Heart right ventricle (tissue), 16 donors: ENCODE measurements at regions of chr16 and their contacts with region 1.

Region 1: DNA sequence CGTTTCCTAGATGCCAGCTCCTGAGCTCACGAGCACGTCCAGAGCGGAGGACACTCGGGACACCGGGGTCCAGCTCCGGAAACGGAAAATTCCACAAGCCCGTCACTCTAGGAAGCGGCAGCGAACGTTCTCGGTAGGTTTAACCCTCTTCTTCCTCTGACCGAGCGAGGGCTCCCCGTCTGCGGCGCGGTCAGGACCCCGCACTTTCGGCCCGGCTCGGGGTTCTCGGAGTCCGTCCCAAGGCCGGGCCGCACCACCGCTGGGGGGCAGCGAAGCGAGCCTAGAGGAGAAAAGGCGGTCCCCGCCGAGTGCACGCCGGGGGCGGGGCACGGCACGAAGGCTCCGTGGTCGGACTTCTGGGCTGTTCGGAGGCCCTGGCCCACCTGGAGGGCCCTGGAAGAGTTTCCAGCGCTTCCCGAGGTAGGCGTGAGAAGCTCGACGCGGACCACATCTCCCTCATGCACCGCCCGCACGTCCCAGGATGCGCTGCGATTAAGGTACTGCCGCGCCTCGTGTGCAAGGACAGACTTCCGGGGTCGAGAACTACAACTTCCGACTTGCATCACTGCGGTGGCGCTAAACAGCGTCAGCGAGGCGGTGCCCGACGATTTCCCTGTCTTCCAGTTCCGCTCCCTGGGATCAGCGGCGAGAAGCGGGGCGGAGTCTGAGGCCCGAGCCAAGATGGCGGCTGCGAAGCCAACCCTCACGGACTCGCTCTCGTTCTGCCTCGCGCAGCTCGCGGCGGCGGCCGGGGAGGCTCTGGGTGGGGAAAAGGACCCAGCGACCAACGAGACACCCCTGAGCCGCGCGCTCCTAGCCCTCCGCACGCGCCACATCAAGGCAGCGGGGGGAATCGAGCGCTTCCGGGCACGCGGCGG is at the start of gene ARMC5:
- DNase-seq: peak; percentile 97 to 98
- ATAC-seq: peak; percentile 87 to 93 (median 90)
- H3K4me3 ChIP-seq: peak within 1 kb of the TSS; percentile 37 to 90 (median 75)
- H3K27ac ChIP-seq: peak within 1 kb of the TSS; percentile 95 to 100 (median 98)
- H3K4me1 ChIP-seq: peaks cover 9 to 55% (median 48%) of the 10 kb centered on the region in 9 donors
- H3K27me3 ChIP-seq: no peaks in the 10 kb centered on the region
- CTCF ChIP-seq: peak; percentile 19 to 83 (median 61)
- total RNA-seq, gene ARMC5: 3.8 to 7.8 (median 6.4) TPM

Region 2: DNA sequence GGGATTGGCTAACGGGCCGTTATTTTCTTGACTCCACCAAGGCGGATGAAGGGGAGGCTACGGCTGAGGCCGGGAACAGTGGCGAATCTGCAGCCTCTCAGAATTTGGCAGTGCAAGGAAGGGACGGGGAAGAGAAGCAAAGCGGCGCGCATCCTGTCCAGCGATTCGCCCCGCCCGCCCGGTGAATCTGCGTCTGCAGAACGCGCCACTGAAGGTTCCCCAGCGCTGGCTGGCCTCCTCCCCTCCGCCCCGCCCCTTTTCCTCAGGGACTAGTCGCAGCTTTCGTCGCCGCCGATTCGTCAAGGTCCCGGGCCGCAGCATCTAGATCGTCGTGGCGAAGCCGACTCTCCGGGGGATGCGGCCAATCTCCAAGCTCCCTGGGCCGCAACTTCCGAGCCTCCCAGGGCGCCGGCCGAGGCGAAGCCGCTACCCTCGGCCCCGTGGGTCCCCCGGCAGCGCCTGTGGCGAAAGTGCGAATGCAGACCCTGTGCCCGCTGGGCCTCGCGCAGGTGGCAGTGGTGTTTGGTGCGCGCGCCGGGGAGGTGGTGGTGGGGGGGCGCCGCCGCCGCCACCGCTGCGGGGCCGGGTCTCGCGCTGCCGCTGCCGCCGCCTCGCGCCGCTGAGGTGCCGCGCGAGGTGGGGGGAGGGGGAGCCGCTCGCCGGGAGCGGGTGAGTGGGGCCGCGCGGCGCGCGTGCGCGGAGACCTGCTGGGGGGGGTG is 501.5 kb before region 1 on chr16 and contains the start of gene SETD1A:
- intact Hi-C with region 1: loop called in 1 of 10 experiments (anchors 5 kb)
- DNase-seq: peak; percentile 96 to 99
- ATAC-seq: peak; percentile 90 to 97 (median 94)
- H3K4me3 ChIP-seq: peak within 1 kb of the TSS; percentile 70 to 99 (median 85)
- H3K27ac ChIP-seq: peak within 1 kb of the TSS; percentile 91 to 100 (median 99)
- H3K4me1 ChIP-seq: peaks cover 6 to 36% (median 29%) of the 10 kb centered on the region in 9 donors
- H3K27me3 ChIP-seq: no peaks in the 10 kb centered on the region
- CTCF ChIP-seq: no peak
- total RNA-seq, gene SETD1A: 7.5 to 11.4 (median 9.2) TPM

Region 3: DNA sequence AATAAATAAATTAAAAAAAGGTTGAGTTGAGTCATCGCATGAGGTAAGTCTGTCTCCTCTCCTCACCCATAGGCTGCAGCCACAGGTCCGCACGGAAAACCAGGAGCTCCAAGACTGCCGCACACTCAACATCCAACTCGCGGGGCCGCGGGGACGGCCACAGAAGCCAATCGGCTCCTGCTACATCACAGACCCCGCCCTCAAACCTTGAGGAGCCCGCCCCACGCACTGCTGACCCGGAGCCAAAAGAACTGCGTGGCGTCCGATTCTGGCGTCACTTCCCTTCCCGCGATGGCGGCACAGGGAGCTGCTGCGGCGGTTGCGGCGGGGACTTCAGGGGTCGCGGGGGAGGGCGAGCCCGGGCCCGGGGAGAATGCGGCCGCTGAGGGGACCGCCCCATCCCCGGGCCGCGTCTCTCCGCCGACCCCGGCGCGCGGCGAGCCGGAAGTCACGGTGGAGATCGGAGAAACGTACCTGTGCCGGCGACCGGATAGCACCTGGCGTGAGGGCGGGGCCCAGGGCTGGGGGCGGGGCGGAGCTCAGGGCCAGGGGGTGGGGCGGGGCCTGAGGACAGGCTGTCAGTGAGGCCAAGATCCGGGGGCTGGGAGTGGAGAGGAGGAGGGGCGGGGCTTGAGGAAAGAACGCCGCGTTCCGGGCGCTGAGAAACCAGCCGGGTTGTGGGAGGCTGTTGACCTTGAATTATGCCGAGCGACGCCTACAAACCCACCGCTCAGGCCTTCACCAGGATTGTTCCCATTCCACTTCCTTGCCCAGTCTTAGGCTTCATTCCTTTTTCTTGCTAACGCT is 341.5 kb before region 1 on chr16 and contains the start of gene KAT8:
- intact Hi-C with region 1: loop called in 1 of 10 experiments (anchors 10 kb)
- DNase-seq: peak; percentile 98 to 99
- ATAC-seq: peak; percentile 93 to 97 (median 94)
- H3K4me3 ChIP-seq: peak within 1 kb of the TSS; percentile 44 to 87 (median 74)
- H3K27ac ChIP-seq: peak within 1 kb of the TSS; percentile 91 to 98 (median 96)
- H3K4me1 ChIP-seq: peaks cover 10 to 62% (median 39%) of the 10 kb centered on the region in 9 donors
- H3K27me3 ChIP-seq: no peaks in the 10 kb centered on the region
- CTCF ChIP-seq: no peak
- total RNA-seq, gene KAT8: 51.9 to 79.9 (median 66.0) TPM

Region 4: DNA sequence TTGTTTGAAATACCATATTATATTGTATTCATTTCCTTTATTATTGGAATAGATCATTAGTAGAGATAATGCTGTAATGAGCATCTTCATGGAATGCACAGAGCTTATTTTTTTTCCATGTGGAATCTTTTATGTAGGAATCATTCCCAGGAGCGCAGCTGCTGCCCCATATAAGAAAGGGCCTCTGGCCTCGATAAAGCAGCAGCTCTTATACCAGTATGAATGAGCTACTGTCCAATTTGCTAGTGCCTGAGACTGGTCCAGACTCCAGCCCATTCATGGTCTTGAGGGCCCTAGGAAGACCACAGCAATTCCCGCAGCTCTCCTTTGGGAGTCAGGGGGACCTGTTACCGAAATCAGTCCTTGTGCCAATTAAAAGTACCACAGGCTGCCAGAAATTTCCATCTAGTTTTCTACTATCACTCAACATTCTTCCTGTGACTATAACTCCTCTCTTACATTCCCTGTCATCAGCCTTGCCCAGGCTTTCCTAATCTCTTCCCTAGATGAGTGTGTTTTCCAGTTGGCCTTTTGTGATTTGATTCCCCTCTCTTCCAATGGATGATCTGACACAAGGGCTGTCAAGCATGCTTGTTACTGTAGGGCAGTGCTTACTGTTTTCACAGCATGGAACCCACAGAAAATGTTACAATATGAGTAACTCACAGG is 18.4 kb before region 1 on chr16:
- intact Hi-C with region 1: no loop called
- DNase-seq: no peak
- ATAC-seq: no peak
- H3K4me3 ChIP-seq: no peak overlapping the region
- H3K27ac ChIP-seq: peak overlapping the region in 5 of 10 donors; percentile 8 to 93 (median 30)
- H3K4me1 ChIP-seq: peaks cover 0 to 37% (median 12%) of the 10 kb centered on the region in 9 donors
- H3K27me3 ChIP-seq: no peaks in the 10 kb centered on the region
- CTCF ChIP-seq: no peak

Region 5: DNA sequence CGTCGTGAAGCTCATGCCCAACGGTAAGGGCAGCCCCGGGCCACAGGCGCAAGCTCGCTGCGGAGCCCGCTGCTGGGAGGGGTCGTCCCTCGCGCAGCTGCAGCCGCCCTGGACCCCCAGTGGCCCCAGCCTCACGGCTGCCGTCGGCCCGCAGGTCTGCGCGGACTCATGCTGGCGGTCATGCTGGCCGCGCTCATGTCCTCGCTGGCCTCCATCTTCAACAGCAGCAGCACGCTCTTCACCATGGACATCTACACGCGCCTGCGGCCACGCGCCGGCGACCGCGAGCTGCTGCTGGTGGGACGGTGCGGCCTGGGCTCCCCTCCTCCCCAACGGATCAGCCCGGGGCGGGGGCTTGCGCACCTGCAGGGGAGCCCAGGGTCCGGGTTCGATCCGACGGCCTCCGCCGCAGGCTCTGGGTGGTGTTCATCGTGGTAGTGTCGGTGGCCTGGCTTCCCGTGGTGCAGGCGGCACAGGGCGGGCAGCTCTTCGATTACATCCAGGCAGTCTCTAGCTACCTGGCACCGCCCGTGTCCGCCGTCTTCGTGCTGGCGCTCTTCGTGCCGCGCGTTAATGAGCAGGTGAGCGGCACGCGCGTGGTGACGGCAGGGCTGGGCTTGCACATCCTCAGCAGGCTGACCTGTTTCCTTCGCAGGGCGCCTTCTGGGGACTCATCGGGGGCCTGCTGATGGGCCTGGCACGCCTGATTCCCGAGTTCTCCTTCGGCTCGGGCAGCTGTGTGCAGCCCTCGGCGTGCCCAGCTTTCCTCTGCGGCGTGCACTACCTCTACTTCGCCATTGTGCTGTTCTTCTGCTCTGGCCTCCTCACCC is 29.6 kb after region 1 on chr16:
- intact Hi-C with region 1: no loop called
- DNase-seq: no peak
- ATAC-seq: peak in 7 of 8 donors; percentile 5 to 39 (median 24)
- H3K4me3 ChIP-seq: peak overlapping the region; percentile 39 to 74 (median 62)
- H3K27ac ChIP-seq: no peak overlapping the region
- H3K4me1 ChIP-seq: peaks cover 9 to 21% (median 19%) of the 10 kb centered on the region in 9 donors
- H3K27me3 ChIP-seq: peaks cover 0 to 30% (median 18%) of the 10 kb centered on the region in 7 donors
- CTCF ChIP-seq: peak in 3 of 9 donors; percentile 4 to 22 (median 14)

Region 6: GRCh38 chr16:31502981-31503380 is 43.9 kb after region 1 on chr16:
- intact Hi-C with region 1: loop called in 3 of 10 experiments (anchors 1 to 5 kb)
- DNase-seq: no peak
- ATAC-seq: no peak
- H3K4me3 ChIP-seq: no peak overlapping the region
- H3K27ac ChIP-seq: peak overlapping the region in 3 of 10 donors; percentile 13 to 30 (median 27)
- H3K4me1 ChIP-seq: peaks cover 2 to 55% (median 39%) of the 10 kb centered on the region in 9 donors
- H3K27me3 ChIP-seq: no peaks in the 10 kb centered on the region
- CTCF ChIP-seq: no peak

Region 7: GRCh38 chr16:31868691-31869167 is 409.6 kb after region 1 on chr16:
- intact Hi-C with region 1: loop called in 6 of 10 experiments (anchors 5 to 10 kb)
- DNase-seq: peak; percentile 63 to 82
- ATAC-seq: peak; percentile 38 to 78 (median 66)
- H3K4me3 ChIP-seq: peak overlapping the region in 2 of 10 donors; percentile 20 to 22
- H3K27ac ChIP-seq: peak overlapping the region in 4 of 10 donors; percentile 0 to 93 (median 36)
- H3K4me1 ChIP-seq: peaks cover 0 to 36% (median 8%) of the 10 kb centered on the region in 9 donors
- H3K27me3 ChIP-seq: peaks cover 0 to 4% (median 0%) of the 10 kb centered on the region in 7 donors
- CTCF ChIP-seq: peak; percentile 74 to 91 (median 83)